ENCODE measurements at regions of chr5 and their contacts with region 1.

Region 1: GRCh38 chr5:81851481-81852178 is 100.7 kb upstream of the SSBP2 start:
- DNase-seq: peak; percentile 98
- H3K4me3 Mint-ChIP-seq: peak overlapping the region; percentile 88
- H3K27ac Mint-ChIP-seq: peak overlapping the region; percentile 92
- H3K4me1 Mint-ChIP-seq: peaks cover 40% of the 10 kb centered on the region
- H3K27me3 Mint-ChIP-seq: no peaks in the 10 kb centered on the region

Region 2: DNA sequence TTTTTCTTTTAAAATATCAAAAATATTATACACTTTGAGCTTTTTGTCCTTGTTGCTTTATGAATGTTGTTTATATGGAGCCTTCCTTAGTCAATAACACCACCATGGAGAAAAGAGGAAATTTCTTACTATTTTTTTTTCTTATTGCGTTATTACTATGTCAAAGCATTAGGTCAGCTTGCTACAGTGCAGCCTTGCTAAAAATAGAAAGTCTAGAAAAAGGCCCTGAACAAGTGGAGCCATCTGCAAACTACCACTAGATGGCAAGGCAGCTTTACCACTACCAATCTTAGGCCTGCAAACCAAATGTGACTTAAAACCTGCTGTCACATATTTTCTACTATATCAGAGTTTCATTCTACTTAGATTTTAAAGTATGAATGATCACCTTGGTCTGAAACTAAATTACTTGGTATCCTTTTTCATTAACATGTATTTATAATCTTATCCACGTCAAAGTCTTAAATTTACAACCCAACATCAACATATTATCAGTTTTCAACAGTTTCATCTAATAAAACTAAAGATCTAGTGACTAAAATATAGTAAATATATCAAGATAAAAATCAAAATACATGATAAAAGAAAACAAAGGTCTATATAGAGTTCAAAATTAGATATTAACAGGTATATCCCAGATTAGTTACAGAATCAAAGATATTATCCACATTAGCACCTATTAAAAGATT is 344.6 kb before region 1 on chr5:
- intact Hi-C with region 1: loop called (anchors 1 kb)
- DNase-seq: peak; percentile 80
- H3K4me3 Mint-ChIP-seq: no peak overlapping the region
- H3K27ac Mint-ChIP-seq: no peak overlapping the region
- H3K4me1 Mint-ChIP-seq: peaks cover 6% of the 10 kb centered on the region
- H3K27me3 Mint-ChIP-seq: no peaks in the 10 kb centered on the region

Region 3: DNA sequence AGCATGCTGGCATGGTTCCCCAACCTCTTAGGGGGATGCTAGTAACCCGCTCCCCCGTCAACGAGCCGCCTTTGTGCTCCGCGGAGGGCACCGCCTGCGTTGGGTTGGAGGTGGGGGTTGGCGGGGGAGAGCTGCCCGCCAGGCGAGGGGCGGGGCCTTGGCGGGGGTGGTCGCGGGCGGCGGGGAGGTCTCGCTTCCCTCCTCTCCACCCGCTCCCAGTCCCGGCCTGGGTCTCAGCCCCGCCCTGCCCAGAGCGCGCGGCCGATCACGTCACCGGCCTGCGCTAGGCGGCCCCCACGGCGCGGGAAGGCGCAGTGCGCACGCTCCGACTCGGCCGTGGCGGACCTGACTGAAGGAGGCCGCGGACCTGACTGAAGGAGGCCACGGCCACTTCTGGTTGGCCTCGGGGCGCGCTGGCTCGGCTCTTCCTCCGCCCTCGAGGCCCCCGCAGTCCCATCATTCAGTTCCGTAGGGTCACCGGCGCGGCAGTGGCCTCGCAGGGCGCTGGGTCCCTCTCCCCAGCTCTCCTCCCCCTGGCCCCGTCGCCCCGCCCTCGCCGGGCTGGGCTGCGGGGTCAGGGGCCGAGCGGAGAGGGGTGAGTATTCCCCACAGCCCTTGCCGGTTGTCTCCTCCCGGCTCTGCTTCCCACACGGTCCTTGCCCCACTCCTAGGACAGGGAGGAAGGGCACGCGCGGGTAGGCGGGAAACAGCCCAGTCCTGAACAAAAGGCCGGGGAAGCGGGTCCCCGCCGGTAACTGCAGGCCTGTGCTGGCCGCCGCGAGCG is 120.3 kb after region 1 on chr5 and contains the start of gene ATG10:
- intact Hi-C with region 1: loop called (anchors 1 kb)
- DNase-seq: peak; percentile 97
- H3K4me3 Mint-ChIP-seq: peak within 1 kb of the TSS; percentile 90
- H3K27ac Mint-ChIP-seq: peak within 1 kb of the TSS; percentile 96
- H3K4me1 Mint-ChIP-seq: peaks cover 25% of the 10 kb centered on the region
- H3K27me3 Mint-ChIP-seq: no peaks in the 10 kb centered on the region
- total RNA-seq, gene ATG10: 5.8 and 5.9 TPM in 2 replicates

Region 4: DNA sequence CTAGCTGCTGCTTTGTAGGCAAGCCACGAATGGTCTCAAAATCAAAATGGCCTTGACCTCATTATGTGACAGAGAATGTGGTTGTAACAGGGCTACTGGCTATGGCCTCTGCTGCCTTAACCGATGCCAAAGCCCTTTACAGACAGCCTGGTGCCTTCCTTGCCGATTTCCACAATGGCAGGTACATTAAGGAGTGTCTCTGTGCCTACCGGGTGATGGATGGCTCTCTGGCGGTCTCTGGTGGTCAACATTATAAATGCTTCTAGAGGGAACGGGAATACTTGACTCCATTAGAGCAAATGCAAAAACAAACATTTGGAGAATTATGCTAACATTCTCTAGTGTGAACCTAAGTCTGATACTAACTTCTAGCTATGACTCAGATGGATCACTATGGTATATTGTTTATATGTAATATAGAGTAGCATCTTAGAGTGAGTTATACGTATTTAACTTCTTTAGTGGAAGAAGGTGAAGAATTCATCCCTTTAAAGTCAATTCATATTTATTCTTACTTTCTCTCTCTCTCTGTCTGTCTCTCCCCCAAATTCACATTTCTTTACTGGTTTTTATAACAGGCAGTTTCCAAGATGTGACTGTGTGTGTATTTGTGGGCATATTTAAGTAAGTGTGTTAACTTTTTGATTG is 374.0 kb after region 1 on chr5:
- intact Hi-C with region 1: loop called (anchors 10 kb)
- DNase-seq: peak; percentile 90
- H3K4me3 Mint-ChIP-seq: no peak overlapping the region
- H3K27ac Mint-ChIP-seq: no peak overlapping the region
- H3K4me1 Mint-ChIP-seq: peaks cover 3% of the 10 kb centered on the region
- H3K27me3 Mint-ChIP-seq: peaks cover 5% of the 10 kb centered on the region